CD8-positive, alpha-beta T cell (primary cell): ENCODE measurements at regions of chr10 and their contacts with region 1.

Region 1: GRCh38 chr10:52499281-52499680 is 185.2 kb downstream of the DKK1 start:
- DNase-seq: no peak
- ATAC-seq: no peak
- H3K4me3 ChIP-seq: no peak overlapping the region
- H3K4me3 Mint-ChIP-seq: no peak overlapping the region
- H3K27ac ChIP-seq: no peak overlapping the region
- H3K27ac Mint-ChIP-seq: no peak overlapping the region
- H3K4me1 ChIP-seq: no peaks in the 10 kb centered on the region
- H3K4me1 Mint-ChIP-seq: no peaks in the 10 kb centered on the region
- H3K27me3 ChIP-seq: no peaks in the 10 kb centered on the region
- H3K27me3 Mint-ChIP-seq: no peaks in the 10 kb centered on the region
- CTCF ChIP-seq: no peak

Region 2: DNA sequence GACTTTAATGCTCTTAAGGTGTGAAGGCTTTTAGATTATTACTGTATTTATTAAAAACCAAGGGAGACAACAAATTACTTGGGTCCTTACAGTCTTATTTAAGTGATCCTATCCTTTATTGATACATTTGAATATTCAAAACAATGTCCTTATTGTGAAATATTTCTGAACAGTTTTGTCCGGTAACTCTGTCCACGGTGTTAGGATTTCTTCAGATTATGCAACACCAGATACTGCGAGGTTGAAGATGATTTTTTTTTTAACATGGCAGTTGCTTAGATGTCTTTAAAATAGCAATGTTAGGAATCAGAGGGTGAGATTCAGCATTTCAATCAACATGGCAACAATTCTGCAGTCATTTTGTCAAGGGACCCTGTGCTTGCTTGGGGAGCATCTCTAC is 976.4 kb before region 1 on chr10:
- CTCF ChIA-PET with region 1: no interaction called
- POLR2A ChIA-PET with region 1: no interaction called
- intact Hi-C with region 1: no loop called
- DNase-seq: no peak
- ATAC-seq: no peak
- H3K4me3 ChIP-seq: no peak overlapping the region
- H3K4me3 Mint-ChIP-seq: no peak overlapping the region
- H3K27ac ChIP-seq: no peak overlapping the region
- H3K27ac Mint-ChIP-seq: no peak overlapping the region
- H3K4me1 ChIP-seq: no peaks in the 10 kb centered on the region
- H3K4me1 Mint-ChIP-seq: no peaks in the 10 kb centered on the region
- H3K27me3 ChIP-seq: no peaks in the 10 kb centered on the region
- H3K27me3 Mint-ChIP-seq: peaks cover 2% of the 10 kb centered on the region
- CTCF ChIP-seq: no peak

Region 3: GRCh38 chr10:52353960-52354394 is 145.3 kb before region 1 on chr10:
- CTCF ChIA-PET with region 1: no interaction called
- POLR2A ChIA-PET with region 1: no interaction called
- intact Hi-C with region 1: no loop called
- DNase-seq: no peak
- ATAC-seq: no peak
- H3K4me3 ChIP-seq: no peak overlapping the region
- H3K4me3 Mint-ChIP-seq: no peak overlapping the region
- H3K27ac ChIP-seq: no peak overlapping the region
- H3K27ac Mint-ChIP-seq: no peak overlapping the region
- H3K4me1 ChIP-seq: no peaks in the 10 kb centered on the region
- H3K4me1 Mint-ChIP-seq: no peaks in the 10 kb centered on the region
- H3K27me3 ChIP-seq: no peaks in the 10 kb centered on the region
- H3K27me3 Mint-ChIP-seq: no peaks in the 10 kb centered on the region
- CTCF ChIP-seq: no peak

Region 4: GRCh38 chr10:52438119-52438518 is 61.2 kb before region 1 on chr10:
- CTCF ChIA-PET with region 1: no interaction called
- POLR2A ChIA-PET with region 1: no interaction called
- intact Hi-C with region 1: loop called in 1 of 2 experiments (anchors 2 kb)
- DNase-seq: no peak
- ATAC-seq: no peak
- H3K4me3 ChIP-seq: no peak overlapping the region
- H3K4me3 Mint-ChIP-seq: no peak overlapping the region
- H3K27ac ChIP-seq: no peak overlapping the region
- H3K27ac Mint-ChIP-seq: no peak overlapping the region
- H3K4me1 ChIP-seq: no peaks in the 10 kb centered on the region
- H3K4me1 Mint-ChIP-seq: no peaks in the 10 kb centered on the region
- H3K27me3 ChIP-seq: no peaks in the 10 kb centered on the region
- H3K27me3 Mint-ChIP-seq: no peaks in the 10 kb centered on the region
- CTCF ChIP-seq: no peak

Region 5: DNA sequence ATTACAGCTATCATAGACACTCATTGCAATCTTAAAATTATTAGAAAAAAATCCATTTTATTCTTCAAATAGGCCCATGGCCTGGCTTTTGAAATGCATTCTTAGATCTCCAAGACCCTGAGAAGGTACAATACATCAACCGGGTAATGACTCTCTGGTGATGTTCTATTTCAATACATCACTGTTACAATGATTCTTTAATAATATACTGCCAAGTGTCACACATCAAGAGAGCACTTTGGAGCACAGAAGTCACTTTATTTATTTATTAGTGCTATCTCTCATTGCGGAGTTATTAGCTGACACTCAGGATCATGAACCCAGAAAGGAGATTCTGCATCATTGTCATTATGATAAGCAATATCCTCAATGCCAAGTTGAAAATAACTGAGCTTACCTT is 1021.8 kb after region 1 on chr10:
- CTCF ChIA-PET with region 1: no interaction called
- POLR2A ChIA-PET with region 1: no interaction called
- intact Hi-C with region 1: no loop called
- DNase-seq: no peak
- ATAC-seq: no peak
- H3K4me3 ChIP-seq: no peak overlapping the region
- H3K4me3 Mint-ChIP-seq: no peak overlapping the region
- H3K27ac ChIP-seq: no peak overlapping the region
- H3K27ac Mint-ChIP-seq: no peak overlapping the region
- H3K4me1 ChIP-seq: no peaks in the 10 kb centered on the region
- H3K4me1 Mint-ChIP-seq: no peaks in the 10 kb centered on the region
- H3K27me3 ChIP-seq: no peaks in the 10 kb centered on the region
- H3K27me3 Mint-ChIP-seq: no peaks in the 10 kb centered on the region
- CTCF ChIP-seq: no peak